Heart left ventricle (tissue), 16 donors: ENCODE measurements at regions of chr15 and their contacts with region 1.

Region 1: GRCh38 chr15:49145651-49146609 is 9.5 kb downstream of the COPS2 start:
- DNase-seq: peak in 2 of 5 donors; percentile 20 to 26
- ATAC-seq: peak in 1 of 4 donors; percentile 51
- H3K4me3 ChIP-seq: no peak overlapping the region
- H3K27ac ChIP-seq: no peak overlapping the region
- H3K4me1 ChIP-seq: peaks cover 0 to 46% (median 28%) of the 10 kb centered on the region in 12 donors
- H3K27me3 ChIP-seq: no peaks in the 10 kb centered on the region
- CTCF ChIP-seq: peak; percentile 45 to 78 (median 66)
- POLR2A ChIP-seq: no peak

Region 2: DNA sequence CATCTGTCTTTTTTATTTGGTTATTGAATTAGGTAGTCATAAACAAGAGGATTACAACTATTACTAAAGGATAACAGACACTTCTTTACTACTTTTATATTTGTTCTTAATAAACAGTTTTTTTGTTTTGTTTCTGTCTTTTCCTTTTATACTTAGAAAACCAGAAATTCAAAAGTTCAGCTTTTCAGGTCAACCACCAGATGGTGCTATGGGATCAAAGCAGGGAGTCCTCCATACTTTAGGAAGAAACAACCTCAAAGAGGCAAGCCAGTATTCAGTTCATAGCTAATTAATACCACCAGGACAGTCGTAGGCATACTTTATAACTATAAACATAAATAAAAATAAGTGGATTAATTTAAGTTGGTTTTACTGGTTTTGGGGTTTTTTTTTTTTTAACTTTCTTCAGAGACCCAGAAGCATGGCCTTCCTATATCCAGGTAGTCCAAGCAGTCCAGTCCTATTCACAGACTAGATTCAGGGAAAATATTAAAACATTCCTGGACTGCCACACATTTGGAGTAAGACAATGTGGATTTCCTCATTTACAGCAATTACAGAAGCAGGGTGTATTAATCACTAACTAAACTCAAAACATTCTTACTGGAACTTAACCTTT is 284.0 kb before region 1 on chr15:
- intact Hi-C with region 1: loop called (anchors 2 to 5 kb)
- DNase-seq: peak in 2 of 5 donors; percentile 24 to 46
- ATAC-seq: peak in 2 of 4 donors; percentile 70 to 78
- H3K4me3 ChIP-seq: no peak overlapping the region
- H3K27ac ChIP-seq: no peak overlapping the region
- H3K4me1 ChIP-seq: no peaks in the 10 kb centered on the region
- H3K27me3 ChIP-seq: no peaks in the 10 kb centered on the region
- CTCF ChIP-seq: peak; percentile 82 to 96 (median 86)
- POLR2A ChIP-seq: no peak

Region 3: DNA sequence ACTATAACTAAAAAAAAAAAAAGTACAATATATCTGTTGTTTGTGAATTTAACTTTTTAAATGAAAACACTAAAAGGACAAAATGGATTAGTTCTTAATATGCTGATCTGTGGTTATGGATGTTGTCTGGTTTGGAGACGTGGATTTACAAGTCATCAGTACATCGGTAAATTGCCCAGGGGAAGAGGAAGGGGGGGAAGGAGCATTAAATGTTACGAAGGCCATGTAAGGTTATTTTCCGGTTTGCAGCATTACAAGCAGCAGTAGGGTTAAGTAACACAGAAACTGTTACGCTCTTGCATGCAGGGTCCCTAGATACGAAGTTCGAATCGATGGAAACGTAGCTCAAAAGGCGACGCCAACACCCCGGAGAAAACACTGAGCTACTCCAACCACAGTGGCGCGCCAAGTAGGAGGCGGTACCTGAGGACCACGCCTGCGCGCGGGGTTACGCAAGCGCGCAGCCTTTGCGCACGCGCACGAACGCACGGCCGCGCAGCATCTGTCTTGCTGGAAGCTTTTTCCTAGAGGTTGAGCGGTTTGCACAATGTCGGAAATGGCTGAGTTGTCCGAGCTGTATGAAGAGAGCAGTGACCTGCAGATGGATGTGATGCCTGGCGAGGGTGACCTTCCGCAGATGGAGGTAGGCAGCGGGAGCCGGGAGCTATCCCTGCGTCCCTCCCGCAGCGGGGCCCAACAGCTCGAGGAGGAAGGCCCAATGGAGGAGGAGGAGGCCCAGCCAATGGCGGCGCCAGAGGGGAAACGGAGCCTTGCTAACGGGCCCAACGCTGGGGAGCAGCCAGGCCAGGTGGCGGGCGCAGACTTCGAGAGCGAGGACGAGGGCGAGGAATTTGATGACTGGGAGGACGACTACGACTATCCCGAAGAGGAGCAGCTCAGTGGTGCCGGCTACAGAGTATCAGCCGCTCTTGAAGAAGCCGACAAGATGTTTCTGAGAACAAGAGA is 268.0 kb before region 1 on chr15 and contains the start of gene EID1:
- intact Hi-C with region 1: loop called in 2 of 10 experiments (anchors 5 kb)
- DNase-seq: peak; percentile 91 to 96 (median 93)
- ATAC-seq: peak; percentile 99 to 100 (median 100)
- H3K4me3 ChIP-seq: peak within 1 kb of the TSS; percentile 56 to 94 (median 74)
- H3K27ac ChIP-seq: peak within 1 kb of the TSS; percentile 51 to 96 (median 90)
- H3K4me1 ChIP-seq: peaks cover 0 to 25% (median 16%) of the 10 kb centered on the region in 12 donors
- H3K27me3 ChIP-seq: no peaks in the 10 kb centered on the region
- CTCF ChIP-seq: peak in 2 of 12 donors; percentile 8 to 29
- POLR2A ChIP-seq: peak in 1 of 2 donors; percentile 77
- total RNA-seq, gene EID1: 169 to 393 (median 224) TPM

Region 4: DNA sequence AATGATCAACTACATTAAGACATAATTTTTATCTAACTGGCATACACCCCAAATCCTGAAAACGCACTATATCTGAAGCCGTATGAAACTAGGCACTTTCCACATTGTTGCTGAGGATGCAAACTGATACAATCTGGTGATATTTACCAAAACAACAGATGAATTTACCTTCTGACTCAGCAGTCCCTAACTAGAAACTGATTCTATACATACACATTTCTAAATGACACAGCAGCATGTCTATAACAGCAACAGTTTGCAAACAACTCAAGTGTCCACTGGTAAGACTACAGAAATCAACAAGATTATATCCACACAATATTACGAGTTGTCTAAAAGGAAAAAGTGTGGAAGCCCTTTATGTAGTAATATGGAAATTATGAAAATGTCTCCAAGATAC is 122.6 kb before region 1 on chr15:
- intact Hi-C with region 1: loop called in 1 of 10 experiments (anchors 10 kb)
- DNase-seq: no peak
- ATAC-seq: no peak
- H3K4me3 ChIP-seq: no peak overlapping the region
- H3K27ac ChIP-seq: no peak overlapping the region
- H3K4me1 ChIP-seq: no peaks in the 10 kb centered on the region
- H3K27me3 ChIP-seq: no peaks in the 10 kb centered on the region
- CTCF ChIP-seq: no peak
- POLR2A ChIP-seq: no peak

Region 5: DNA sequence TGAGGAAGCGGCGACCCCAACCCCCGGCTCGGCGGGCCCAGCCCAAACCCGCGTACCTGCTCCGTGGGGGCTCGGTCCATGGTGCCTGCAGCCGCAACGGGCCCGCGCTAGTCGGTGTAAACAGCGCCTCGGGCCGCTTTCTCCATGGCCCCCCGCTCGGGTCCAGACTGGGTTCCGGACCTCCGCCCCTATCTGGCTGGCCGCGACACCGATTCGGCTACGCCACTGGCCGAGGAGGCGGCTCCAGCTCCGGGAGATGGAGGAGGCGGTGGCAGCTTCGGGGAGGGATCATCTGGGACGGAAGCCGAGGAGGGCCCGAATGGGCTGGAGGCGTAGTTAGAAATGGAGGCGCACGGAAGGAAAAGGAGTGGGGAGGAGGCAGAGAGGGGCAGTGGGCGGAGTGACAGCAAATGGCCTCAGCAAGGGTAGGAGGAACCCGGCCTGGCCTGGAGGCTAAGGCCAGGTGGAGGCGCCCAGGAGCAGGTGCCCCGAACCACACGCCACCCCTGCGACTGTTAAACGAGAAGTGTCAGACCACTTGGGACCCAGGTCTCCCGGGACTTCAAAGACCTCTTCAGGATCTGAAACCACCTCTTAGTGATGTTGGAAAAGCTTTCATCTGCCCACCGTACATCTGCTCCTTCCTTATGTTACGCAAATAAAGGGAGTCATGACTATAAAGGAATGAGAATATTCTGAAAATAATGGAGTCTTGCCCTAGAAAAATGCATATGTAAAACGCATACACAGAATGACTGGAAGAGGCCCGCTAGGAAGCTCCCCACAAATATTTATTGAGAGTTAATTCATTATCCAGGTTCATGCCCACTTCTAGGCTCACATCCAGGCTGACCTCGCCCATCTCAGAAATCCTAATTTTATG is 99.5 kb before region 1 on chr15 and contains the start of gene SECISBP2L:
- intact Hi-C with region 1: loop called in 5 of 10 experiments (anchors 5 to 10 kb)
- DNase-seq: peak; percentile 95 to 97 (median 96)
- ATAC-seq: peak; percentile 96 to 99 (median 98)
- H3K4me3 ChIP-seq: peak within 1 kb of the TSS; percentile 57 to 99 (median 96)
- H3K27ac ChIP-seq: peak within 1 kb of the TSS; percentile 26 to 93 (median 90)
- H3K4me1 ChIP-seq: peaks cover 3 to 42% (median 27%) of the 10 kb centered on the region in 12 donors
- H3K27me3 ChIP-seq: no peaks in the 10 kb centered on the region
- CTCF ChIP-seq: peak in 9 of 12 donors; percentile 12 to 60 (median 33)
- POLR2A ChIP-seq: peak in 1 of 2 donors; percentile 83
- total RNA-seq, gene SECISBP2L: 25.5 to 52.4 (median 45.3) TPM

Region 6: GRCh38 chr15:49059491-49059890 is 86.4 kb before region 1 on chr15:
- intact Hi-C with region 1: loop called in 1 of 10 experiments (anchors 10 kb)
- DNase-seq: no peak
- ATAC-seq: no peak
- H3K4me3 ChIP-seq: no peak overlapping the region
- H3K27ac ChIP-seq: no peak overlapping the region
- H3K4me1 ChIP-seq: peaks cover 0 to 15% (median 0%) of the 10 kb centered on the region in 12 donors
- H3K27me3 ChIP-seq: no peaks in the 10 kb centered on the region
- CTCF ChIP-seq: no peak
- POLR2A ChIP-seq: no peak

Region 7: DNA sequence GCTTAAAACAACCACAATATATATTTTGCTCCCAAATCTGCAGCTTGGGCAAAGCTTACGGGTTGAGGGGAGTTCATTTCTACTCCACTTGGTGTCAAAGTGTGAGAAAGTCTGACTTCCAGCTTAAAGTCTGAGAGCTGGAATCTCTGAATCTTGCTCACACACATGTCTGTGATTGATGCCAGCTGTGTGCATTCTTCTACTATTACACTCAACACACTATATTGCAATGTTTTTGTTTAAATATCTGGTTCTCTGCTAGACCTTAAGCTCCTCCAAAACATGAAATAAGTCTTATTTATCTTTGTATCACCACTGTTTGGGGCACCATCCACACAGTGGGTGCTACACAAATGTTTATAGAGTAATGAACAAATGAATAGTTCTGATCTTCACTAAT is 63.0 kb before region 1 on chr15:
- intact Hi-C with region 1: no loop called
- DNase-seq: no peak
- ATAC-seq: no peak
- H3K4me3 ChIP-seq: no peak overlapping the region
- H3K27ac ChIP-seq: no peak overlapping the region
- H3K4me1 ChIP-seq: no peaks in the 10 kb centered on the region
- H3K27me3 ChIP-seq: no peaks in the 10 kb centered on the region
- CTCF ChIP-seq: no peak
- POLR2A ChIP-seq: no peak

Region 8: GRCh38 chr15:49187549-49188245 is 41.8 kb after region 1 on chr15:
- intact Hi-C with region 1: no loop called
- DNase-seq: no peak
- ATAC-seq: peak in 1 of 4 donors; percentile 56
- H3K4me3 ChIP-seq: no peak overlapping the region
- H3K27ac ChIP-seq: no peak overlapping the region
- H3K4me1 ChIP-seq: peaks cover 0 to 9% (median 0%) of the 10 kb centered on the region in 12 donors
- H3K27me3 ChIP-seq: no peaks in the 10 kb centered on the region
- CTCF ChIP-seq: no peak
- POLR2A ChIP-seq: no peak

Region 9: GRCh38 chr15:49421991-49422390 is 276.1 kb after region 1 on chr15:
- intact Hi-C with region 1: loop called in 1 of 10 experiments (anchors 5 kb)
- DNase-seq: peak in 3 of 5 donors; percentile 20 to 55 (median 25)
- ATAC-seq: peak in 3 of 4 donors; percentile 52 to 64 (median 62)
- H3K4me3 ChIP-seq: peak overlapping the region in 9 of 12 donors; percentile 19 to 62 (median 32)
- H3K27ac ChIP-seq: peak overlapping the region in 6 of 12 donors; percentile 63 to 77 (median 69)
- H3K4me1 ChIP-seq: peaks cover 0 to 9% (median 0%) of the 10 kb centered on the region in 12 donors
- H3K27me3 ChIP-seq: no peaks in the 10 kb centered on the region
- CTCF ChIP-seq: peak; percentile 50 to 84 (median 67)
- POLR2A ChIP-seq: no peak